PC-3 (cell line): ENCODE measurements at regions of chr4 and their contacts with region 1.

Region 1: DNA sequence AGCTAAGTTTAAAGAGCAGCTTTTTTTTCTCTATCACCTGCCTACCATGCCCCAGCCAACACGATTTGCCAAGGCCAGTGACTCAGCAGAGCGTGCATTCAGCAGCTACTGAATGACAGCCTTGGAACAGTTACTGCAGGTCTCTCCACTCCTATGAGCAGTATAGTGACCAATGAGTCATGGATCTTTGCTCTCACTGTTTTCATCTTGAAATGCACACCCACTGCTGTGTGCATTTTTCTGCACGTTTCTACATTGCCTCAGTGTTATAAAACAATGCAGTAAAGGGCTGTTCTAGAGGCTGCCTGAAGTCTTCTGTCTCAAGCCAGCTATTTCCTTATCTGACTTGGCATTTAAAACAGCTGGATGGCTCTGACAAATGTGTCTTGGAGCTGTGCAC is 66.0 kb upstream of the C4orf54 start:
- DNase-seq: peak; percentile 75
- ATAC-seq: peak; percentile 95
- H3K4me3 ChIP-seq: no peak overlapping the region
- H3K27ac ChIP-seq: peak overlapping the region; percentile 14; the same call in 1 of the 2 replicates
- H3K4me1 ChIP-seq: peaks cover 15% of the 10 kb centered on the region
- H3K27me3 ChIP-seq: no peaks in the 10 kb centered on the region
- CTCF ChIP-seq: no peak

Region 2: DNA sequence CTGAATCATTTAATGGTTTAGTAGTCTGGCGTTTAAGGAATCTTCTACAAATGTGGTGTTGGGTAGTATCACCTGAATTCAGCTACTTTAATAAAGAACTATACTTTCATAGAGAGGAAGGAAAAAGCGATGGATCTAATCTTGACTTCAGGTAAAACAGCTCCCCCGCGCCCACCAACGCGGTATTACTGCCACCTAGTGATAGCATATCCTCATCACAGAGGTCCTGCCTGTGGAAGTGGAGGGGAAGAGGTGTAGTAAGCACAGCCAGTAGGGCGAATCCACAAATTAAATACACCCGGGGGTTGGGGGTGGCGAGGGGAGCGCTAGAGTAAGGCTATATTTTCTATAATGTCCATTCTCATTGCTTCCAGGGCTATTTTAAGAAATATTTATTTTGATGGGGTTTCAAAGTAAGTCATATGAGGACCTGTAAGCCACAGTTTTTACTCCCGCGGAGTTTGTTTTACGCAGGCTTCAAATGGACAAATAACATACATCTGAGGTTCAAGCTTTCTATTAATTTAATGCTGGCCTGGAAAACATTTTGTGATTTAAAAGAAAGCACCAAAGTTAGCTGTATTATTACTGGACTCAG is 84.7 kb after region 1 on chr4:
- CTCF ChIA-PET with region 1: interaction called, 6 read pairs
- POLR2A ChIA-PET with region 1: no interaction called
- intact Hi-C with region 1: loop called (anchors 5 kb)
- DNase-seq: peak; percentile 80
- ATAC-seq: peak; percentile 80
- H3K4me3 ChIP-seq: no peak overlapping the region
- H3K27ac ChIP-seq: no peak overlapping the region
- H3K4me1 ChIP-seq: no peaks in the 10 kb centered on the region
- H3K27me3 ChIP-seq: no peaks in the 10 kb centered on the region
- CTCF ChIP-seq: peak; percentile 85

Region 3: DNA sequence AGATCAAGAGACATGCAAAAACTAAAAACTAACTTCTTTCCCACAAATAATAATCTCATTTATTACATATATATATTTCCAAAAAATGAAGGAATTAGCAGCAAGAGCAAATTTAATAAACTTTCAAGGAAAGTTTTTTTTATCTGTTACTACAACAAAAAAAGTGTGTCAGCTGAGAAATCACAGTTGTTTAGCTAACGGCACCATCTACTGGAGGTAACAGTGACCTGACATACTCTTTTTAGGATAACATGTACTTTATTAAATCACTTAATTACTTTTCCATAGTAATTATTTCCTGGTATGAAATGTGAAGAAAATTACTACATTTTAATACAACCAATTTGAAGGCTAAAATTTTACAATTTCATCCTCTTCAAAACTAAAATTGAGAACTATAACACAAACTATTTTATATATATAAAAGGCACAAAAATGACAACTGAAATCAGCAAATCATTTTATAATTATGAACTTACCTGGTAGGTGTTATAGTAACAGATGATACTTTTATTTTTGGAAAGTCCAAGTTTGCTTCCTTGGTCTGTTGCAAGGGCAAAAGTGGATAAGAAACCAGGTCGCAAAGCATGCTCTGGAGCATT is 161.6 kb after region 1 on chr4:
- CTCF ChIA-PET with region 1: no interaction called
- POLR2A ChIA-PET with region 1: no interaction called
- intact Hi-C with region 1: loop called (anchors 10 kb)
- DNase-seq: peak; percentile 54
- ATAC-seq: no peak
- H3K4me3 ChIP-seq: no peak overlapping the region
- H3K27ac ChIP-seq: peak overlapping the region; percentile 58; the same call in 1 of the 2 replicates
- H3K4me1 ChIP-seq: peaks cover 13% of the 10 kb centered on the region
- H3K27me3 ChIP-seq: no peaks in the 10 kb centered on the region
- CTCF ChIP-seq: peak; percentile 69

Region 4: DNA sequence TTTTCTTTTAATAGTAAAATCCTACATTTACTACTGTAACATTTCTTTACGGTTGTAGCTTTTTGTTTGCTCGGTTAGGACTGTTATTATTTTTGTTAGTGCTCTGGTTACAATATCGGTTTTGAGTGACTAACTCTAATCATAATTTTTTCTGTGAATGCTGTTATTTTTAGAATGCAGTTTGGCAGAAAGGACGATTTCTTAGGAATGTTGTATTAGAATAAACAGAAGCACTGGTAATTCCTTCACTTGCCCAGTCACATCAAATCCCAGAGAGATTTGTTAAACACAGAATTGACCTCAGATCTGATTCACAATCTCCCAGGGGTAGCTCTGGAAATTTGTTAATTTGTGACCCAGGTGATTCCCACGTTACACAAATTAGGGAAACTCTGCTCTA is 444.9 kb after region 1 on chr4:
- CTCF ChIA-PET with region 1: no interaction called
- POLR2A ChIA-PET with region 1: no interaction called
- intact Hi-C with region 1: no loop called
- DNase-seq: no peak
- ATAC-seq: no peak
- H3K4me3 ChIP-seq: no peak overlapping the region
- H3K27ac ChIP-seq: no peak overlapping the region
- H3K4me1 ChIP-seq: no peaks in the 10 kb centered on the region
- H3K27me3 ChIP-seq: no peaks in the 10 kb centered on the region
- CTCF ChIP-seq: no peak